ENCODE measurements at regions of chr10 and their contacts with region 1.

Region 1: GRCh38 chr10:129971381-129972144 is 7.5 kb upstream of the EBF3 start:
- DNase-seq: peak in 4 of 7 donors; percentile 34 to 51 (median 40)
- H3K4me3 ChIP-seq: peak overlapping the region in 1 of 4 donors; percentile 41
- H3K27ac ChIP-seq: no peak overlapping the region
- H3K4me1 ChIP-seq: peaks cover 0 to 9% of the 10 kb centered on the region in 2 donors
- H3K27me3 ChIP-seq: peaks cover 81% of the 10 kb centered on the region
- CTCF ChIP-seq: peak in 3 of 6 experiments; percentile 38 to 60 (median 49)
- POLR2A ChIP-seq: no peak

Region 2: DNA sequence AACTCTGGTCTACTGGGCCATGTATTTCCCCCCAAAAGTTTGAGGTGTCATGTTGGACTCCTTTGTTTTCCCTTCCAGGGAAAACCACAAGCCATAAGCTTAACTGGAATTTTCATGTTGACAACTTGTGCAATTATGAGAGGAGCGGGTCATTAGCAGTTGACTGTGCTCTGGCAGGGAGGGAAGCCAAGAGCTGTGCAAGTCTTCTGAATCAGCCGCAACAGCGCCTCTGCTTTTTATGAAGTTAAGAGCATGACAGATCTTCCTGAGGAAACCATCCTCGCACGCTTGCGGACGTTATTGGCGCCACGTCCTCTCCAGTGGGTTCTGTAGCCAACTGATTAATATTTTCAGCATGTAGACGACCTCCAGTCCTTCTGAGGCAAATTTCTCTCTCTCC is 1696.6 kb before region 1 on chr10:
- intact Hi-C with region 1: loop called in 1 of 2 experiments (anchors 10 kb)
- DNase-seq: peak in 1 of 7 donors; percentile 3
- H3K4me3 ChIP-seq: no peak overlapping the region
- H3K27ac ChIP-seq: no peak overlapping the region
- H3K4me1 ChIP-seq: no peaks in the 10 kb centered on the region
- H3K27me3 ChIP-seq: peaks cover 13% of the 10 kb centered on the region
- CTCF ChIP-seq: no peak
- POLR2A ChIP-seq: no peak

Region 3: GRCh38 chr10:129030996-129031843 is 940.3 kb before region 1 on chr10:
- intact Hi-C with region 1: loop called in 1 of 2 experiments (anchors 5 kb)
- DNase-seq: peak; percentile 27 to 66 (median 40)
- H3K4me3 ChIP-seq: no peak overlapping the region
- H3K27ac ChIP-seq: no peak overlapping the region
- H3K4me1 ChIP-seq: no peaks in the 10 kb centered on the region
- H3K27me3 ChIP-seq: peaks cover 28% of the 10 kb centered on the region
- CTCF ChIP-seq: peak; percentile 64 to 86 (median 78)
- POLR2A ChIP-seq: no peak

Region 4: GRCh38 chr10:130127364-130128061 is 155.9 kb after region 1 on chr10:
- intact Hi-C with region 1: loop called in 1 of 2 experiments (anchors 10 kb)
- DNase-seq: peak; percentile 40 to 78 (median 61)
- H3K4me3 ChIP-seq: no peak overlapping the region
- H3K27ac ChIP-seq: no peak overlapping the region
- H3K4me1 ChIP-seq: no peaks in the 10 kb centered on the region
- H3K27me3 ChIP-seq: peaks cover 4% of the 10 kb centered on the region
- CTCF ChIP-seq: peak; percentile 40 to 71 (median 62)
- POLR2A ChIP-seq: no peak

Measured in adrenal gland (tissue), 19 donors.